ENCODE measurements at regions of chr2 and their contacts with region 1.

Region 1: DNA sequence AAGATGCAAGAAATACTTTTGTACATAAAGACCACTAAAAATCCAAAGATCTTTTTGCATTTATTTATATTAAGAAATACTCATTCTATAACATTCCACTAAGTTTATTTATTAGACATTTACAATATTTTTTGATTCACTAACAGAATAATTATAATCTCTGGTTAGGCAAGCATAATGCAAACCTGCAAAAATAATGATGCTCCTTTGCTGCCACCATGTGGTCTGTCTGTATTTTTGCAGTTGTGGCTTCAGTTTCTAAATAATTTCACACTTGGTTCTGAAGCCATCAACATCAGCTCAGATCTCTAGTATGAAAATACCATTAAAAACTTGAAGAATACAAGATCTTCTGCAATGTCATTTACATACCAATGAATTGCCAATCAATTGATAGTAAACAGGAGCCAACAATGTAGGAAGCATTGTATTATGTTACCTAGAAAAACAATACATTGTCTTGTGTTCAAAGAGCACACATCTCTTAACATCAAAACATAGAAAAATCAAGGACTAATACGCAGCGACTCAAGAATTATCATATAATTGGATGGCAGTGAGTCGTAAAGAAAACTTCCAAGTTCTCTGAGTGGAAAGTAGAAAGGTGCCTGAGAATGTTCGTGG is 28.8 kb upstream of the WDR75 start:
- DNase-seq: peak in 30 of 35 experiments; percentile 2 to 75 (median 22)
- ATAC-seq: peak in 2 of 4 experiments; percentile 52 to 57
- H3K4me3 ChIP-seq: no peak overlapping the region
- H3K4me3 Mint-ChIP-seq: no peak overlapping the region
- H3K27ac ChIP-seq: no peak overlapping the region
- H3K27ac Mint-ChIP-seq: no peak overlapping the region
- H3K4me1 ChIP-seq: peaks cover 0 to 6% of the 10 kb centered on the region in 2 experiments
- H3K4me1 Mint-ChIP-seq: peaks cover 8 to 11% (median 10%) of the 10 kb centered on the region in 3 donors
- H3K27me3 ChIP-seq: no peaks in the 10 kb centered on the region
- H3K27me3 Mint-ChIP-seq: no peaks in the 10 kb centered on the region

Region 2: GRCh38 chr2:189092936-189093335 is 319.5 kb before region 1 on chr2:
- CTCF ChIA-PET with region 1: interaction called, 4 to 16 read pairs
- POLR2A ChIA-PET with region 1: no interaction called
- DNase-seq: no peak
- ATAC-seq: no peak
- H3K4me3 ChIP-seq: no peak overlapping the region
- H3K4me3 Mint-ChIP-seq: no peak overlapping the region
- H3K27ac ChIP-seq: no peak overlapping the region
- H3K27ac Mint-ChIP-seq: no peak overlapping the region
- H3K4me1 ChIP-seq: no peaks in the 10 kb centered on the region
- H3K4me1 Mint-ChIP-seq: peaks cover 6 to 13% (median 7%) of the 10 kb centered on the region in 3 donors
- H3K27me3 ChIP-seq: no peaks in the 10 kb centered on the region
- H3K27me3 Mint-ChIP-seq: no peaks in the 10 kb centered on the region

Region 3: GRCh38 chr2:189425676-189426075 is 13.2 kb after region 1 on chr2:
- CTCF ChIA-PET with region 1: no interaction called
- POLR2A ChIA-PET with region 1: no interaction called
- DNase-seq: no peak
- ATAC-seq: no peak
- H3K4me3 ChIP-seq: no peak overlapping the region
- H3K4me3 Mint-ChIP-seq: no peak overlapping the region
- H3K27ac ChIP-seq: no peak overlapping the region
- H3K27ac Mint-ChIP-seq: no peak overlapping the region
- H3K4me1 ChIP-seq: no peaks in the 10 kb centered on the region
- H3K4me1 Mint-ChIP-seq: peaks cover 1 to 5% (median 2%) of the 10 kb centered on the region in 3 donors
- H3K27me3 ChIP-seq: peaks cover 0 to 3% of the 10 kb centered on the region in 2 experiments
- H3K27me3 Mint-ChIP-seq: peaks cover 0 to 5% of the 10 kb centered on the region in 2 donors